ENCODE measurements at regions of chr20 and their contacts with region 1.

Region 1: GRCh38 chr20:23200918-23201317 is 114.8 kb upstream of the CD93 start:
- DNase-seq: peak; percentile 61 to 66
- H3K4me3 ChIP-seq: no peak overlapping the region
- H3K4me3 Mint-ChIP-seq: no peak overlapping the region
- H3K27ac Mint-ChIP-seq: no peak overlapping the region
- H3K4me1 ChIP-seq: peaks cover 12% of the 10 kb centered on the region; the same call in 1 of the 2 replicates
- H3K4me1 Mint-ChIP-seq: peaks cover 34% of the 10 kb centered on the region
- H3K27me3 ChIP-seq: no peaks in the 10 kb centered on the region
- H3K27me3 Mint-ChIP-seq: no peaks in the 10 kb centered on the region
- CTCF ChIP-seq: peak; percentile 33 to 44

Region 2: DNA sequence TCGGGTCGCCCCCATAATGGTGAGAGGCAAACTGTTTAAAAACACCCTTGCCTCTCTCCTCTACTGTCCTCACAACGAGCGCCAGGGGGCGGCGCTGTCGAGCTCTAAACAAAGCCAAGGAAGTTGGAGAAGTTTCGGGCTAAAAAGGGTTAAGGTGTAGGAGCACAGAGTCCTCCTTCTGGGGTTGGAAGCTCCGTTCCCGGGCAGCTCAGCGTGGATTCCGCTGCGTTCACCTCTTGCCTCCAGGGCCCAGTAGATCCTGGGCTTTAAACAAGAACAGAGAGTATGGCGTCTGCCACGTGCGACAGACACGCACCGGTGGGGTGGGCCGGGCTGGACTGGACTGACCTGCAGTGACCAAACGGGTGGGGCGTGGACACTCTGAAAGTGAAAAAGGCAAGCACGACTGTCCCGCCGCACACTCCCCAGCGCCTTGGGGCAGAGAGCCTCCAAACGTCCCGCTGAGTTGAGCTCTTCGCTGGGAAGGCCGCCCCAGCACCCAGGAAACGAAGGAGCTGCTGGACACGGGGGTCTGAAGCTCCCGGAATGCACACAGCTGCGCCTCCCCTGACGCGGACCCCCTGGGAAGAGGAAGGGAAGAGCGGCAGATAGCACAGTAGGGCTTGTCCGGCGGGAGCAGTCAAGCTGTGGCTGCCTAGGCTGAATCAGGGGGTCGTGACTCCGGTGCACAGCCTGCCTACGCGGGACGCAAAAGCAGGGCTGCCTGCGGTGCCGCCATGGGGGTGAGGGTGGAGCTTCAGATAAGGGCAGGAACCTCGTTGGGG is 149.9 kb before region 1 on chr20:
- CTCF ChIA-PET with region 1: interaction called, 14 read pairs
- POLR2A ChIA-PET with region 1: no interaction called
- intact Hi-C with region 1: loop called (anchors 2 kb)
- DNase-seq: peak; percentile 78 to 82
- H3K4me3 ChIP-seq: peak overlapping the region; percentile 45
- H3K4me3 Mint-ChIP-seq: peak overlapping the region; percentile 85
- H3K27ac Mint-ChIP-seq: peak overlapping the region; percentile 97
- H3K4me1 ChIP-seq: peaks cover 30% of the 10 kb centered on the region
- H3K4me1 Mint-ChIP-seq: peaks cover 32% of the 10 kb centered on the region
- H3K27me3 ChIP-seq: no peaks in the 10 kb centered on the region
- H3K27me3 Mint-ChIP-seq: no peaks in the 10 kb centered on the region
- CTCF ChIP-seq: peak; percentile 46 to 65

Region 3: DNA sequence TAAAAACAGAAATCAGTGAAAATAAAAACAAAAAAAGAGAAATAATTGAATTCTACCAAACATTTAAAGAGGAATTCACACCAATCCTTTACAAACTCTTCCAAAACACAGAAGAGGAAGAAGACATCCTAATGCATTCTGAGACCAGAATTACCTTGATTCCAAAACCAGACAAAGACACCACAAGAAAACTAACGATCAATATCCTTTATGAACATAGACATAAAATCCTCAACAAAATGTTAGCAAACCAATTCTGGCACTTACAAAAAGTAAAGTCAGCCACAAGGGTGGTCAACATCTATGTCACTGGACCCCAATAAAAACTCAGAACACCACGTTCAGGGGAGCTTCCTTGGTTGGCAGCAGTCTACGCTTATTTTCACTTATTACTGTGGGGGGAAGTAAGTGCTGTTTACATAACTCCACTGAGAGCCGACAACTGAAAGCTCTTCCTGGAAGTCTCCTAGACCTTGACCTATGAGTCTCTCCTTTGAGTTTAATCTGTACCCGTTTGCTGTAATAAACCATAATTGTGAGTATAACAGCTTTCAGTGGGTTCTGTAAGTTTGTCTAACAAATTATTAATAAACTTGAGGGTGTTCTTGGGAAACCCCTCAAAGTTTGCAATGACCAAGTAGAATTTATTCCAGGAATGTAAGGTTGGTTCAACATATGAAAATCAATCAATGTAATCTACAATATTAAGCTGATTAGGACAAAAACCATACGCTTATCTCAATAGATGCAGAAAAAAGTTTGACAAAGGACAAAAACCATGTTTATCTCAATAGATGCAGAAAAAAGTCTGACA is 185.6 kb after region 1 on chr20:
- CTCF ChIA-PET with region 1: no interaction called
- POLR2A ChIA-PET with region 1: no interaction called
- intact Hi-C with region 1: no loop called
- DNase-seq: no peak
- H3K4me3 ChIP-seq: no peak overlapping the region
- H3K4me3 Mint-ChIP-seq: no peak overlapping the region
- H3K27ac Mint-ChIP-seq: no peak overlapping the region
- H3K4me1 ChIP-seq: no peaks in the 10 kb centered on the region; the same call in 1 of the 2 replicates
- H3K4me1 Mint-ChIP-seq: no peaks in the 10 kb centered on the region
- H3K27me3 ChIP-seq: no peaks in the 10 kb centered on the region
- H3K27me3 Mint-ChIP-seq: no peaks in the 10 kb centered on the region
- CTCF ChIP-seq: no peak

Measured in Caco-2 (cell line).